HCT116 (cell line): ENCODE measurements at regions of chr16 and their contacts with region 1.

Region 1: DNA sequence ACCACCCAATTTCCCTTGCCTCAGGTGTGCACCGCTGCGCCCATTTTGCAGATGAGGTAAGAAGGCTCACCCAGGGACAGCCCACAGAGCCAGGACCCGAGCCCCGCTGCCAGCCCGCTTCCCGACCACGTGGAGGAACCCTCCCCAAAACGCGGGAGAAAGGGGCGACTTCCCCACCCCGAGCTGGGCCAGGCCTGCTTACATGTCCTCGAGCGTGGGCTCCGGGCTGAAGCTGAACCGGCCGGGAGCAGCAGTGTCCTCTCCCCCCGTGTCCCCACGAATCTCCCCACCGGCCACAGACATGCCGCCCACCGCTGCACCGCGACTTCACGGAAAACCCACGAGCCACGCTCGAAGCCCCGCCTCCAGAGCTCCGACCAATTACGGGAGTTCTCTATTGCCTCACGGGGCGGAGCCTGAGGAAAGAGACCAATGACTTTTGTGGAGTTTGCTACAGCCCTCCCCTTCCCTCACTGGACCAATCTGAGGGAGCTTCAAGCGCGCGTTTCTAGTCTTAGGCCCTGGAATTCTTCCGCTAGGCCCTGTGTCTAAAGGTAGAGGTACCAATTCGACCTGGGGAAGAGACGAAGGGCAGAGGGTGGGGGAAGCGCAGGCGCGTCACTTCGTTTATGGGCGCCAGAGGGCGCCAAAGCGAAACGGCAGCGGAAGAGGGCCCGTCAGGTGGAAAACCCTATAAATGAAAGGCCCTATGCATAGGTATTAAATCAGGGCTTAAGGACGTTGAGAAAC is at the start of gene DCTPP1:
- DNase-seq: peak; percentile 99
- ATAC-seq: peak; percentile 94
- H3K4me3 ChIP-seq: peak within 1 kb of the TSS; percentile 89 to 94
- H3K27ac ChIP-seq: peak within 1 kb of the TSS; percentile 66
- H3K4me1 ChIP-seq: peaks cover 8 to 29% of the 10 kb centered on the region in 2 experiments
- H3K27me3 ChIP-seq: no peaks in the 10 kb centered on the region
- CTCF ChIP-seq: peak; percentile 79 to 94 (median 81)
- POLR2A ChIP-seq: peak; percentile 61
- RAD21 ChIP-seq: peak; percentile 89
- total RNA-seq, gene DCTPP1: 125 TPM

Region 2: GRCh38 chr16:30378236-30379204 is 51.3 kb before region 1 on chr16:
- CTCF ChIA-PET with region 1: no interaction called
- POLR2A ChIA-PET with region 1: no interaction called
- RAD21 ChIA-PET with region 1: no interaction called
- intact Hi-C with region 1: no loop called
- DNase-seq: peak; percentile 92
- ATAC-seq: peak; percentile 91
- H3K4me3 ChIP-seq: peak overlapping the region; percentile 64 to 95
- H3K27ac ChIP-seq: peak overlapping the region; percentile 97
- H3K4me1 ChIP-seq: peaks cover 14 to 33% of the 10 kb centered on the region in 2 experiments
- H3K27me3 ChIP-seq: no peaks in the 10 kb centered on the region
- CTCF ChIP-seq: peak in 2 of 3 experiments; percentile 16 to 24; a peak in 3 of 6 replicates
- POLR2A ChIP-seq: peak; percentile 76
- RAD21 ChIP-seq: no peak

Region 3: DNA sequence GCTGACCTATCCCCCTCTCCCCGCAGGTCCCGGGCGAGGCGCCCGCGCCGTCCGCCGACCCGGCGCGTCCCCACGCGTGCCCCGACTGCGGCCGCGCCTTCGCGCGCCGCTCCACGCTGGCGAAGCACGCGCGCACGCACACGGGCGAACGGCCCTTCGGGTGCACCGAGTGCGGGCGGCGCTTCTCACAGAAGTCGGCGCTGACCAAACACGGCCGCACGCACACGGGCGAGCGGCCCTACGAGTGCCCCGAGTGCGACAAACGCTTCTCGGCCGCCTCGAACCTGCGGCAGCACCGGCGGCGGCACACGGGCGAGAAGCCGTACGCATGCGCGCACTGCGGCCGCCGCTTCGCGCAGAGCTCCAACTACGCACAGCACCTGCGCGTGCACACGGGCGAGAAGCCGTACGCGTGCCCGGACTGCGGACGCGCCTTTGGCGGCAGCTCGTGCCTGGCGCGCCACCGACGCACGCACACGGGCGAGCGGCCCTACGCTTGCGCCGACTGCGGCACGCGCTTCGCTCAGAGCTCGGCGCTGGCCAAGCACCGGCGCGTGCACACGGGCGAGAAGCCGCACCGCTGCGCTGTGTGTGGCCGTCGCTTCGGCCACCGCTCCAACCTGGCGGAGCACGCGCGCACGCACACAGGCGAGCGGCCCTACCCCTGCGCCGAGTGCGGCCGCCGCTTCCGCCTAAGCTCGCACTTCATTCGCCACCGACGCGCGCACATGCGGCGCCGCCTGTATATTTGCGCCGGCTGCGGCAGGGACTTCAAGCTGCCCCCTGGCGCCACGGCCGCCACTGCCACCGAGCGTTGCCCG is 12.1 kb before region 1 on chr16:
- CTCF ChIA-PET with region 1: interaction called, 52 read pairs
- POLR2A ChIA-PET with region 1: interaction called, 15 read pairs
- RAD21 ChIA-PET with region 1: interaction called, 4 read pairs
- intact Hi-C with region 1: no loop called
- DNase-seq: peak; percentile 91
- ATAC-seq: peak; percentile 91
- H3K4me3 ChIP-seq: peak overlapping the region; percentile 26 to 44
- H3K27ac ChIP-seq: peak overlapping the region; percentile 83
- H3K4me1 ChIP-seq: peaks cover 6 to 39% of the 10 kb centered on the region in 2 experiments; a peak in 3 of 4 replicates
- H3K27me3 ChIP-seq: no peaks in the 10 kb centered on the region
- CTCF ChIP-seq: peak in 1 of 3 experiments; percentile 35; a peak in 1 of 6 replicates
- POLR2A ChIP-seq: peak; percentile 13
- RAD21 ChIP-seq: no peak

Region 4: GRCh38 chr16:30526823-30527635 is 97.2 kb after region 1 on chr16:
- CTCF ChIA-PET with region 1: interaction called, 4 read pairs
- POLR2A ChIA-PET with region 1: interaction called, 3 read pairs
- RAD21 ChIA-PET with region 1: no interaction called
- intact Hi-C with region 1: loop called (anchors 5 kb)
- DNase-seq: peak; percentile 94
- ATAC-seq: peak; percentile 91
- H3K4me3 ChIP-seq: peak overlapping the region; percentile 69 to 77
- H3K27ac ChIP-seq: peak overlapping the region; percentile 99
- H3K4me1 ChIP-seq: peaks cover 7 to 25% of the 10 kb centered on the region in 2 experiments
- H3K27me3 ChIP-seq: no peaks in the 10 kb centered on the region
- CTCF ChIP-seq: peak in 1 of 3 experiments; percentile 24; a peak in 2 of 6 replicates
- POLR2A ChIP-seq: no peak
- RAD21 ChIP-seq: no peak

Region 5: DNA sequence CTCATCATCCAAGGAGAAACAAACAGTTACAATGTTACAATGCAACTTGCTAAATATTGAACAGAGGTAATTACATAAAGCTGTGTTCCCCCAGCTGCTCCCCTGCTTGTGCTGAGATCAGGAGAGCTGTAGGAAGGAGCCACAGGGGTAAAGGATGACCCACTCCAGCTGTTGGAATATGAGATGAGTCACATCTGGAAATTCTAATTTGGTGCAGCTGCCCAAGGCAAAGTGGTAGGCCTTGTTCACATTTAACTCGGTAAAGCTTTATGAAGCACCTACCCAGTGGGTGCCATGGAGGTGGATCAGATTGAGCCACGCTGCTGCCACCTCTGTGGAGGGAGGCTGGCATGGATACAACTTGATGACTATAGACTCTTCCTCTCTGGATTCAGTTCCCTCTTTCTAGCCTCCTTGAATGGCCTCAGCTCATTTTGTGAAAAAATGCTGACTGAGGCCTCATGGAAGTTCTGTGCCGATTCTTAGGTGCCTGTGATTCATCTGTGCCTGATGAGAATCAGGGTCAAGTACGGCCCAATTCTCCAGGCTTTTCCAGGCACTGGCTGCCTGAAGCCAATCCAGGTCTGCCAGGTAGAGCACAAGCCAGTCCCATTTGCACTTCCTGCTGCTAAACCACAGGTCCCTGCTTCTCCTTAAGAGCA is 172.9 kb after region 1 on chr16:
- CTCF ChIA-PET with region 1: interaction called, 30 read pairs
- POLR2A ChIA-PET with region 1: interaction called, 6 read pairs
- RAD21 ChIA-PET with region 1: interaction called, 8 to 9 read pairs
- intact Hi-C with region 1: loop called (anchors 5 kb)
- DNase-seq: no peak
- ATAC-seq: no peak
- H3K4me3 ChIP-seq: no peak overlapping the region
- H3K27ac ChIP-seq: no peak overlapping the region
- H3K4me1 ChIP-seq: peaks cover 0 to 5% of the 10 kb centered on the region in 2 experiments; a peak in 3 of 4 replicates
- H3K27me3 ChIP-seq: no peaks in the 10 kb centered on the region
- CTCF ChIP-seq: no peak
- POLR2A ChIP-seq: no peak
- RAD21 ChIP-seq: no peak

Region 6: GRCh38 chr16:30615358-30616091 is 185.7 kb after region 1 on chr16:
- CTCF ChIA-PET with region 1: interaction called, 21 read pairs
- POLR2A ChIA-PET with region 1: interaction called, 7 read pairs
- RAD21 ChIA-PET with region 1: no interaction called
- intact Hi-C with region 1: no loop called
- DNase-seq: peak; percentile 48
- ATAC-seq: peak; percentile 84
- H3K4me3 ChIP-seq: no peak overlapping the region
- H3K27ac ChIP-seq: no peak overlapping the region
- H3K4me1 ChIP-seq: peaks cover 6 to 11% of the 10 kb centered on the region in 2 experiments; a peak in 2 of 4 replicates
- H3K27me3 ChIP-seq: no peaks in the 10 kb centered on the region
- CTCF ChIP-seq: peak; percentile 65 to 87 (median 68); a peak in 5 of 6 replicates
- POLR2A ChIP-seq: no peak
- RAD21 ChIP-seq: peak; percentile 82